ENCODE measurements at regions of chr14 and their contacts with region 1.

Region 1: DNA sequence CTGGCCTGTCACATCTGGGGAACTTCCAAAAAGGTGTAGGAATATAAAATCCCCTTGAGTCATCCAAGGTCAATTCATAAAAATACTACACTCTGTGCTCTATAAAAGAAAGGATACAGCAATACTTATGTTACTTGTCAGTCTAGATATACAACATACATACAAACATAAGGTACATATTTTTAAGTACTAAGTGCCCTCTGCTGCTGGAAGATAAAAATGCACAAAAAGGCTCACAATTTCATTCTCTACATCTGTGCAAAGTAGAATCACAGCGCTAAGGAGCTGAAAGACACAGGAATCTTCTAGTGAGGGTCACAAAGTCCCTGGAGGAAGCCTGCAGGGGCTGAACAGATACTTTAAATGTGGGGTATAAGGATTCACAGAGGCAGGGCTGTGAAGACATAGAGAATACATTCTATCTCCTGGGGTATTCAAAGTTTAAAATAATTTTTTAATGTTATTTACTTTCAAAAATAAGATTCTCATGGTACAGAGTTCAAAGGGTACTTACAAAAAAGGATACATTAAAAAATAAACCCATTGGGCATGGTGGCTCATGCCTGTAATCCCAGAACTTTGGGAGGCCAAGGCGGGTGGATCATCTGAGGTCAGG is 10.2 kb upstream of the GOLGA5 start:
- DNase-seq: peak; percentile 51
- CTCF ChIP-seq: peak; percentile 71

Region 2: GRCh38 chr14:92712654-92713051 is 71.3 kb before region 1 on chr14:
- in situ Hi-C with region 1: loop called (anchors 5 kb)
- DNase-seq: no peak
- CTCF ChIP-seq: no peak